ENCODE measurements at regions of chr14 and their contacts with region 1.

Region 1: DNA sequence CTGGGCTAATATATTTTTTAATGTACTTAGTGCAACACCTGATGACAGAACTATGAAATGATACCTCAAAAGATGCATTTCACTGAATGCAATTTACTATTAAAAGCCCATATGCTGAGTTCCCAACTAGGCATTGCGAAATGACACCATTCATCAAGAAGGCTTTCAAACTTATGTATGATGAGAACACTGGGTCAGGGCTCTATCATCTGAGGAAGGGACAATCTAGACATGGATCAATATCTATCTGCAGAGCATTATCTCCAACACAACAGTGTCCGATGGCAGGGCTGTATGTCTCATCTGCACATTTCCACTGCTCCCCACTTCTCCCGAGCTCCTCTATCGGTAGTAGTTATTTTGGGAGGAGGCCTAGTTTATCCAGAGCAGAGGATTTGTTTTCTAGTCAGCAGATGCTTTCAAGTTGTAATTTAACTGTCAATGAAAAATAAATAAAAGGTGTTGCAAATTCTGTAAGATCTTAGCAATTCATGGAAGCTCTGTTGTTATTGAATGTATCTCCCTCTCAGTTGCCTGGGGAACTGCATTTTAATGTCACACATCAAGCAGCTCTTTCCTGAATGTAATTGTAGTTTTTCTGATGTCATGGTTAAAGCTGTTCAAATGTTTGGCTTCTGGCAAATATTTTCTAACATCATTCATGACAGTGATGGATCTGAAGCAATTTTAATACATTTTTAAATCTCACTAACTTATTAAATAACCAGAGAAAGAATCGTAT is 7.4 kb upstream of the GCH1 start:
- DNase-seq: no peak
- ATAC-seq: no peak
- H3K4me3 ChIP-seq: no peak overlapping the region
- H3K27ac ChIP-seq: no peak overlapping the region
- H3K4me1 ChIP-seq: no peaks in the 10 kb centered on the region
- H3K27me3 ChIP-seq: peaks cover 8% of the 10 kb centered on the region; the same call in 1 of the 2 replicates
- CTCF ChIP-seq: no peak
- POLR2A ChIP-seq: no peak
- RAD21 ChIP-seq: no peak

Region 2: DNA sequence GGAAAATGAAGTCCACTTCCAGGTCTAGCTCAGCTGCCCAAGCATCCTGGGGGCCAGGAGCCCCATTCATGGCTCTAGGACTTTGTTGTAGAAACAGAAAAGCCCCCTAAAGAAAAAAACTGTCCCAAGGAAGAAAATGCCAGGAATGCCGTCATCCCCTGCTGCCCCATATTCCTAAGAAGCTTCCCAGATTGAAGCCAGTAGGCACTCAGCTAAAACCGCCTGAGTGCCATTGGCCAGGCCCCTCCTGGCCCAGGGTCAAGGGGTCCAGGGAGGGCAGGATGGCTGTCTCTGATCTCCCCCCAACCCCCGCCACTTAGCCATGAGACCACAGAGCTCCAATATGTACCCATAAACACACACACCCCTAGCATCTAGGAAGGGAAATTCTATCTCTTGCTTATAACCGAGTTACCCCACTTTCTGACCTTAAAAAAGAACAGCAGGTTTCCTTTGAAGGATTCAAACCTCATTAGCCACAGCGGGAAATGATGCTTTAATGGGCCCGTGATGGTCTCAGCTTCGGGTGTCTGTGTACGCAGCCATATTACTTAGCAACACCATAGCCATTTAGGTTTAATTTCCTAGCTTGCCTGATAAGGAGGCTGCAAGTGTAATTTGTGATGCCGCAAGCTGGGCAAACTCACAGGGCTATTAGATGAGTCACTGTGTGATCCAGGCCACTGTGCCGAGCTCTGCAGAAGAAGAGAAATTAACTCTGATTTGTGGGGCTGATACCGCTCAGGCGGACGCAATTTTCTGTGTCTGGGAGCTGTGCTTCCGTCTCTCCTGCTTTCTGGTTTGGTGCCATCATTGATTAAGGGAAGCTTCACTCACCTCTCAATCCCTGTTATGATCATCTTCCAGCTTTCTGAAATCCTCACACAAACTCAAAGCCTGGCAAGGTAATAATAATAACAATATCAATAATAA is 91.5 kb before region 1 on chr14:
- CTCF ChIA-PET with region 1: no interaction called
- POLR2A ChIA-PET with region 1: no interaction called
- dilution Hi-C with region 1: no loop called
- in situ Hi-C with region 1: no loop called
- intact Hi-C with region 1: no loop called
- DNase-seq: peak; percentile 69
- ATAC-seq: peak; percentile 95
- H3K4me3 ChIP-seq: no peak overlapping the region
- H3K27ac ChIP-seq: no peak overlapping the region
- H3K4me1 ChIP-seq: no peaks in the 10 kb centered on the region; the same call in 1 of the 2 replicates
- H3K27me3 ChIP-seq: peaks cover 18% of the 10 kb centered on the region
- CTCF ChIP-seq: no peak
- POLR2A ChIP-seq: no peak
- RAD21 ChIP-seq: no peak

Region 3: GRCh38 chr14:54976316-54976715 is 66.3 kb after region 1 on chr14:
- CTCF ChIA-PET with region 1: no interaction called
- POLR2A ChIA-PET with region 1: no interaction called
- dilution Hi-C with region 1: no loop called
- in situ Hi-C with region 1: no loop called
- intact Hi-C with region 1: loop called (anchors 5 kb)
- DNase-seq: peak; percentile 82
- ATAC-seq: peak; percentile 80
- H3K4me3 ChIP-seq: no peak overlapping the region
- H3K27ac ChIP-seq: peak overlapping the region; percentile 44; the same call in 1 of the 2 replicates
- H3K4me1 ChIP-seq: 0 out of 2 replicates have a peak, but pooled peaks cover 2% of the 10 kb centered on the region
- H3K27me3 ChIP-seq: no peaks in the 10 kb centered on the region
- CTCF ChIP-seq: no peak
- POLR2A ChIP-seq: no peak
- RAD21 ChIP-seq: no peak

Measured in IMR-90 (cell line).